ENCODE measurements at regions of chr2 and their contacts with region 1.

Region 1: DNA sequence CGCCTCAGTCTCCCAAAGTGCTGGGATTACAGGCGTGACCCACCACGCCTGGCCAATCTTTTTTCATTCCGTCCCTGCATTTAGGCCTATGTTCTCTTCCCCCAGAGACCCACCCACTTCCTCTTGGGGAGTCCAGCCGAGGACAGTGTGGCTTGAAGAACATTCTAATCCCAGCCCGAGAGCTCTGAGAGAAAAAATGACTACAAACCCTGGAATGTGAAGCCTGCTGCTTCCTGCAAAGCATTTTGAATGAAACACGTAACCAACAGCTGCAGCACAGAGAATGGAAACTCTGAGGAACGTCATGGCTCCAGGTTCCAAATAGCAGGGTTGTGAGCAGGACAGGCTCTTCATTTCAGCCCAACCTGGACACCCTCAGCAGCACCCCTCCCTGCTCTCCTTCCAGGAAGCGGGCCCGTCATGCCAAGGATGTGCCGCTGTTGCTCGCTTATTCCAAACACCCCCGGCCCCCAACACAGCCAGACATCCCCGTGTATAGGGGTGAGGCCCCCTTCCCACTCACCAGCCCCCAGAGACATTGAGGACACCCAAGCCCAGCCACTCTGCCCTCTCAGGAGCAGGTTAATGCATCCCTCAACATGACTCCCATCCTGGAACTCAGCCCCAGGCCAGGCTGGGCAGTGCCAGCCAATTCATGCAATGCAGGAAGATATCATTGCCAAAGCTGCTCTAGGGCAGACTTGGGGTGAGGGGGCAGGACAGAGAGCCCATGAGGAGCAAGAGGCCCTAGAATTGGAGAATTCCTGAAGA is 139.8 kb downstream of the ZFP36L2 start:
- DNase-seq: peak; percentile 96
- H3K4me3 ChIP-seq: no peak overlapping the region
- H3K27ac ChIP-seq: peak overlapping the region; percentile 87
- H3K4me1 ChIP-seq: peaks cover 44% of the 10 kb centered on the region
- H3K27me3 ChIP-seq: no peaks in the 10 kb centered on the region
- CTCF ChIP-seq: no peak
- POLR2A ChIP-seq: peak; percentile 17

Region 2: DNA sequence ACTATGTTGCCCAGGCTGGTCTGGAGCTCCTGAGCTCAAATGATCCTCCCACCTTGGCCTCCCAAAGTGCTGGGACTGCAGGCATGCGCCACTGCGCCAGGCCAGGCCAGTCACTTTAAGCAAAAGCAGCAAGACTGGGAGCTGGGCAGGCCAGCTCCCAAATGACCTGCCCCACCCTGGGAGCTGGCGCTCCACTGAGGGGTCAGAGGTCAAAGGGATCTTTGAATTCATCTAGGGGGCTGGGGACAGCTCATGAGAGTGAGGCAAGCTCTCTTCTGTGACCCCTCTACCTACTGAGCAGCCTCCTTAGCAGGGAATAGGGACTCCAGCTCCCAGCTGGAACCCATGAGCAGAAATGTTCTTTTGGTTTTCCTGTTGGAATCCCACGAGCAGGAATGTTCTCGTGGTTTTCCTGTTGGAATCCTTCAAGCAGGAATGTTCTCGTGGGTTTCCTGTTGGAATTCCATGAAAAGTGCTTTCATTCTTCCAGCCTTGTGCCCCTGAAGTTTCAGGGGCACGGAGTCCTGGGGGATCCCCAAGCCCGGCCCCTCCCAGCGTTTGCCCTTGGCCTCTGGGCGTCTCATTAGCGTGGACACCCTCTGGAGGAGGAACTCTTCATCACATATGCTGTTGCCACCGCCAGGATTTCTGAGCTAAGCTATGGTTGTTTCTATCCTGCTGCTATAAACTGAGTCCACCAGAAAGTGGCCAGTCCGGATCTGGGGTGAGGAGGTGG is 132.2 kb before region 1 on chr2:
- CTCF ChIA-PET with region 1: no interaction called
- POLR2A ChIA-PET with region 1: no interaction called
- dilution Hi-C with region 1: no loop called
- intact Hi-C with region 1: loop called (anchors 2 kb)
- DNase-seq: no peak
- H3K4me3 ChIP-seq: no peak overlapping the region
- H3K27ac ChIP-seq: peak overlapping the region; percentile 65
- H3K4me1 ChIP-seq: peaks cover 30% of the 10 kb centered on the region
- H3K27me3 ChIP-seq: no peaks in the 10 kb centered on the region
- CTCF ChIP-seq: no peak
- POLR2A ChIP-seq: no peak

Region 3: DNA sequence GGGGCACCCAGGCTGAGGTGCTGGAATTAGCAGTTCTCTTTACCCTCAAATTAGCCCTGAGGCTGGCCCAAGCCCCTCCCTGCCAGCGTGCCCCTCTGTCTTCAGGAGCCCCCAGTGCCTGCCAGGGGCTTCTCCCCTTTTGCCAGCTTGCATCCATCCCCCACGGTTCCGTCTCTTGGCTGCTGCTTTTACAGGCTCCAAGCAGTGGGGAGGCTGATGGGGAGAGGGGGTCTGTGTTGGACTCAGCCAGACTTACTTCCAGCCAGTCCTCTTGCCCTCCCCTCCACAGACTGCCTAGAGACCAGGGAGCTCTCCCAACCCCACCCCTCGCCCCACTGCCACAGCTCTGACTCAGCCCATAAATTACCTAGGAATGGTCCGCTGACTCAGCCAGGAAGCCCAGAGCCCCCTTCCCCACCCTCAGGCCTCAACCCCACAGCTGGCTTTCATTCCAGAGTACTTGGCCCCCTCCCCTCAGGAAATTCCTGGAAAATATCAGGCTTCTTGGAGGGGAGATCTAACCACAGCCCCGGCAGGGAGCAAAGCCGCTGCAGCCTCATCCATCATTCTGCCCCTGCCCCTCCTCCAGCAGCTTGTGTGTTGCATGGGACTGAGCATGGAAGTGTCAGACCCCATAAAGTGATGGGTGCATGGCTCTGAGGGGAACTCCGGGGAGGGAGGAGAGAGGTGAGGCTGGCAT is 44.8 kb before region 1 on chr2:
- CTCF ChIA-PET with region 1: interaction called, 4 read pairs
- POLR2A ChIA-PET with region 1: interaction called, 4 read pairs
- dilution Hi-C with region 1: no loop called
- intact Hi-C with region 1: loop called (anchors 1 kb)
- DNase-seq: peak; percentile 98
- H3K4me3 ChIP-seq: no peak overlapping the region
- H3K27ac ChIP-seq: peak overlapping the region; percentile 45
- H3K4me1 ChIP-seq: peaks cover 42% of the 10 kb centered on the region
- H3K27me3 ChIP-seq: no peaks in the 10 kb centered on the region
- CTCF ChIP-seq: no peak
- POLR2A ChIP-seq: no peak

Region 4: DNA sequence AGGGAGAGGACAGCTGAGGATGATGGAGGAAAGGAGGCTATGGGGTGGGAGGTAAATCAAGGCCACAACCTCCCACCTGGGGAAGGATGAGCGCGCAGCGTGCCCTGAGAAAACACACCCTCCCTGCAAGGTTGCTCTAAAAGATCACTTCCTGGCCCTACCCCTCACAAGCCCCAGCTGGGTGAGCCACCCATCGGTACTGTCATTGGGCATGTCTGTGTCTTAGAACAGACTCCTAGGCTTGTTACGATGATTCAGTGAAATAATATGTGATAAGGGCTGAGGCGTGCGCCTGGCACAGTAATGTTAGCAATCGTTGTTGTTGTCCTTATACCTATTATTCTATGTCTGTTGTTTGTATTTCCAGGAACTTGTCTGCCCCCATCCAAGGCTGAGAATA is 35.3 kb before region 1 on chr2:
- CTCF ChIA-PET with region 1: interaction called, 3 read pairs
- POLR2A ChIA-PET with region 1: interaction called, 3 read pairs
- dilution Hi-C with region 1: no loop called
- intact Hi-C with region 1: loop called (anchors 2 kb)
- DNase-seq: peak; percentile 81
- H3K4me3 ChIP-seq: no peak overlapping the region
- H3K27ac ChIP-seq: peak overlapping the region; percentile 14
- H3K4me1 ChIP-seq: peaks cover 32% of the 10 kb centered on the region
- H3K27me3 ChIP-seq: no peaks in the 10 kb centered on the region
- CTCF ChIP-seq: no peak
- POLR2A ChIP-seq: no peak

Region 5: GRCh38 chr2:43075054-43075593 is 11.5 kb before region 1 on chr2:
- CTCF ChIA-PET with region 1: interaction called, 8 read pairs
- POLR2A ChIA-PET with region 1: no interaction called
- dilution Hi-C with region 1: no loop called
- intact Hi-C with region 1: loop called (anchors 1 kb)
- DNase-seq: peak; percentile 97
- H3K4me3 ChIP-seq: no peak overlapping the region
- H3K27ac ChIP-seq: peak overlapping the region; percentile 95
- H3K4me1 ChIP-seq: peaks cover 27% of the 10 kb centered on the region
- H3K27me3 ChIP-seq: no peaks in the 10 kb centered on the region
- CTCF ChIP-seq: peak in 1 of 2 donors; percentile 1
- POLR2A ChIP-seq: peak; percentile 40

Region 6: GRCh38 chr2:43114210-43114609 is 27.6 kb after region 1 on chr2:
- CTCF ChIA-PET with region 1: no interaction called
- POLR2A ChIA-PET with region 1: interaction called, 5 read pairs
- dilution Hi-C with region 1: no loop called
- intact Hi-C with region 1: loop called (anchors 1 kb)
- DNase-seq: peak; percentile 96
- H3K4me3 ChIP-seq: no peak overlapping the region
- H3K27ac ChIP-seq: peak overlapping the region; percentile 49
- H3K4me1 ChIP-seq: peaks cover 25% of the 10 kb centered on the region
- H3K27me3 ChIP-seq: no peaks in the 10 kb centered on the region
- CTCF ChIP-seq: no peak
- POLR2A ChIP-seq: peak; percentile 47

Region 7: DNA sequence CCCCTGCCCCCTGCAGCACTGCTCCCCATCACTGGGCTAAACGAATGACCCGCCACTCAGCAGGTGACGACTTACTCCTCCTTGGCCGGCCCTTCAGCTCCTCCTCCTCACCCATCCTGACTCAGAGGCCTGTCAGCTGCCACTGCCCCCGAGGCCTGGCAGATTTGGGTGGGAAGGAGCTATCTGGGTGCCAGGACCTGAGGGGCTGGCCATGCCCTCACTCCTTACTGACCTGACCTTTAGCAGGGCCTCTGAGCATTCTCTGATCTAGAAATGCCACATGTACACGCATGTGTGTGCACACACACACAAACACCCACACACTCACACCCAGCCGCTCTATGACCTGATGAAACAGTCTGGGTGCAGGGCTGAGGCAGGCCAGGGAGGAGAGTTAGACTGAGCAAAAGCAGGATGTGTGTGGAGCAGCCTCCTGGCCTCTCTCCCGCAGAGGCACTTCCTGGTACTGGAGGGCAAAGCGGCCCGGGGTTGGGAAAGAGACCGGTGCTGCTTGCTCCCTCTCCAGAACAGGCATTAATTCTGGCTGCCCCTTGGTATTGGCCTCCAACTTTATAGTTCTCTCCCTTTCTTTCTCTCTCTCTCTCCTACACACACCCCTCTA is 71.7 kb after region 1 on chr2:
- CTCF ChIA-PET with region 1: no interaction called
- POLR2A ChIA-PET with region 1: no interaction called
- dilution Hi-C with region 1: no loop called
- intact Hi-C with region 1: no loop called
- DNase-seq: peak; percentile 87
- H3K4me3 ChIP-seq: no peak overlapping the region
- H3K27ac ChIP-seq: peak overlapping the region; percentile 23
- H3K4me1 ChIP-seq: peaks cover 13% of the 10 kb centered on the region
- H3K27me3 ChIP-seq: no peaks in the 10 kb centered on the region
- CTCF ChIP-seq: no peak
- POLR2A ChIP-seq: peak; percentile 13

Region 8: GRCh38 chr2:43219383-43220228 is 133.0 kb after region 1 on chr2:
- CTCF ChIA-PET with region 1: interaction called, 3 read pairs
- POLR2A ChIA-PET with region 1: no interaction called
- dilution Hi-C with region 1: no loop called
- intact Hi-C with region 1: loop called (anchors 1 kb)
- DNase-seq: peak; percentile 84
- H3K4me3 ChIP-seq: peak overlapping the region in 2 of 3 experiments; percentile 0 to 37
- H3K27ac ChIP-seq: peak overlapping the region; percentile 88
- H3K4me1 ChIP-seq: peaks cover 54% of the 10 kb centered on the region
- H3K27me3 ChIP-seq: no peaks in the 10 kb centered on the region
- CTCF ChIP-seq: no peak
- POLR2A ChIP-seq: peak; percentile 62

Measured in endothelial cell of umbilical vein (primary cell).